Activated CD8-positive, alpha-beta memory T cell treated with anti-CD3 and anti-CD28 coated beads, Interleukin-2, amount 10 ng/mL, durations not matched to agents 7 days and 5 days (primary cell): ENCODE measurements at regions of chr4 and their contacts with region 1.

Region 1: GRCh38 chr4:8403173-8403753 is 37.3 kb downstream of the ACOX3 start:
- DNase-seq: peak; percentile 46
- ATAC-seq: peak; percentile 57
- H3K4me3 Mint-ChIP-seq: no peak overlapping the region
- H3K27ac Mint-ChIP-seq: no peak overlapping the region
- H3K4me1 Mint-ChIP-seq: no peaks in the 10 kb centered on the region
- H3K27me3 Mint-ChIP-seq: no peaks in the 10 kb centered on the region

Region 2: DNA sequence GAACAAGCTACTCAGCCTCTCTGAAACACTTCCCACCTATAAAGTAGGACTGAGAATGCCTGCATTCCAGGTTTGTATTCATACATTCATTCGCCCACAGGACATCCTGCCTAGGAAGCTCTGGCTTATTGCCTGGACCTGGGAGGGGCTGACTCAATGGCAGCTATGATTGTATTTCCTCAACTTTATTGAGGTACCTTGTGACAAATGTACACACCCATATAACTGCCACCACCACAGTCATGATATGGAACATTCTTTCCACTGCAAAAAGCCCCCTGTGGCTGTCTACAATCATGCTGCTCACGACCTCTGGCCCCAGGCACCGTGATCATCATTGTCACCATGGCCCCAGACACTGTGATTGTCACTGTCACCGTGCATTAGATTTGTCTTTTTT is 313.0 kb before region 1 on chr4:
- CTCF ChIA-PET with region 1: no interaction called
- DNase-seq: no peak
- ATAC-seq: peak; percentile 71
- H3K4me3 Mint-ChIP-seq: no peak overlapping the region
- H3K27ac Mint-ChIP-seq: no peak overlapping the region
- H3K4me1 Mint-ChIP-seq: no peaks in the 10 kb centered on the region
- H3K27me3 Mint-ChIP-seq: no peaks in the 10 kb centered on the region

Region 3: GRCh38 chr4:8241895-8242696 is 161.2 kb before region 1 on chr4:
- CTCF ChIA-PET with region 1: interaction called, 16 read pairs
- DNase-seq: peak; percentile 78
- ATAC-seq: peak; percentile 89
- H3K4me3 Mint-ChIP-seq: no peak overlapping the region
- H3K27ac Mint-ChIP-seq: no peak overlapping the region
- H3K4me1 Mint-ChIP-seq: peaks cover 1% of the 10 kb centered on the region
- H3K27me3 Mint-ChIP-seq: no peaks in the 10 kb centered on the region

Region 4: DNA sequence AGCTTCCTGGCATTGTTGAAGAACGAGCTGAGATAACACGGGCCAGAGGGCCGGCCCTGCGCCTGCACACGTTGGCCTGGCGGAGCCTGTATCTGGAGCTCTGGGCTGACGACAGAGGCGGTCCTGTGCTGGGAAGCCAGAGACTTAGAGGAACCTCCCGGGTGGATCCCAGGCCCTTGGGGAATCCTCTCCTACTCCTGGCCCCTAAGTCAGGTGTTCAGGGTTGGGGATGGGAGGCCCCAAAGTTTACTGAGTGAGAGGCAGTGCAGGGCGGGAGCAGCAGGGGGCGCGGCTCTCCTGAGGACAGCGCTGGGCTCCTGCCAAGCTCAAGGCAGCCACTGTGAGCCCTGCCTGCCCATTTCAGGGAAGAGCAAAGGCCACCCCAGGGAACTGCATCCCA is 136.2 kb before region 1 on chr4:
- CTCF ChIA-PET with region 1: interaction called, 12 read pairs
- DNase-seq: peak; percentile 53
- ATAC-seq: peak; percentile 59
- H3K4me3 Mint-ChIP-seq: no peak overlapping the region
- H3K27ac Mint-ChIP-seq: no peak overlapping the region
- H3K4me1 Mint-ChIP-seq: peaks cover 1% of the 10 kb centered on the region
- H3K27me3 Mint-ChIP-seq: peaks cover 33% of the 10 kb centered on the region